Caco-2 (cell line): ENCODE measurements at regions of chr1 and their contacts with region 1.

Region 1: GRCh38 chr1:210099921-210100320 is 132.7 kb upstream of the SERTAD4 start:
- DNase-seq: no peak
- H3K4me3 ChIP-seq: no peak overlapping the region
- H3K4me3 Mint-ChIP-seq: no peak overlapping the region
- H3K27ac Mint-ChIP-seq: no peak overlapping the region
- H3K4me1 ChIP-seq: peaks cover 20% of the 10 kb centered on the region
- H3K4me1 Mint-ChIP-seq: peaks cover 6% of the 10 kb centered on the region
- H3K27me3 ChIP-seq: no peaks in the 10 kb centered on the region
- H3K27me3 Mint-ChIP-seq: no peaks in the 10 kb centered on the region
- CTCF ChIP-seq: no peak

Region 2: GRCh38 chr1:209816923-209817322 is 283.0 kb before region 1 on chr1:
- CTCF ChIA-PET with region 1: no interaction called
- POLR2A ChIA-PET with region 1: no interaction called
- intact Hi-C with region 1: no loop called
- DNase-seq: no peak
- H3K4me3 ChIP-seq: no peak overlapping the region
- H3K4me3 Mint-ChIP-seq: peak overlapping the region; percentile 34
- H3K27ac Mint-ChIP-seq: peak overlapping the region; percentile 82
- H3K4me1 ChIP-seq: 0 out of 2 replicates have a peak, but pooled peaks cover 4% of the 10 kb centered on the region
- H3K4me1 Mint-ChIP-seq: peaks cover 8% of the 10 kb centered on the region
- H3K27me3 ChIP-seq: no peaks in the 10 kb centered on the region
- H3K27me3 Mint-ChIP-seq: no peaks in the 10 kb centered on the region
- CTCF ChIP-seq: no peak

Region 3: DNA sequence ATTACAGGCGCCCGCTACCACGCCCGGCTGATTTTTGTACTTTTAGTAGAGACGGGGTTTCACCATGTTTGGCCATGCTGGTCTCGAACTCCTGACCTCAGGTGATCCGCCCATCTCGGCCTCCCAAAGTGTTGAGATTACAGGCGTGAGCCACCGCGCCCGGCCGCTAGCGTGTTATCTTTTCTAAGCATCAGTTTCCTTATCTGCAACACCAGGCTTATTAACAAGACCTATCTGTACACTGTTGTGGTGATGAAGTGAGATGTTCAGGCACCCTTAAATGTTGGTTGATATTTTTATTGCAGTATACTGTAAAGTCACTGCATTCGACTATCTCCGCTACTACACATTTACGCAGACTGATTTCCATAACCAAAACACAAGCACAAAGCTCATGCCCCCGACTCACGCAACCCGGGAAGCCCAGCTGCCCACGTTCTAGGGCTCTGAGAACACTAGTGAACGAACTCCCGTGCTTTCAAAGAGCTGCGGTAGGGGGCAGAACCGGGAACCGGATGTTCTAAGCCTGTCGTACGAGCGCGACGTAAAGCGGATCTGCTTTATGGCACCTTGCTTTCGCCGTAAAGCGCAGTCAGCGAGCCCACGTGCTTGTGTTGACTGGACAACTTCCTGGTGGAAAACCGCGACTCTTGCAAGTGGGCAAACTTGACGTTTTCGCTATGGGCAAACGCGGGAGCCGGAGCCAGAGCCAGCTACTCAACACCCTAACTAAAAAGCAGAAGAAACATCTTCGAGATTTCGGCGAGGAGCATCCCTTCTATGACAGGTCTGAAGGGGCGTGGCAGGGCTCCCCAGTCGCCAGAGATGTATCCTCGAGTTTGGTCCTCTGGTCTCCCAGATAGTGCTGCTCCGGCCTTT is 272.3 kb before region 1 on chr1 and contains the start of gene UTP25:
- CTCF ChIA-PET with region 1: no interaction called
- POLR2A ChIA-PET with region 1: no interaction called
- intact Hi-C with region 1: loop called (anchors 5 kb)
- DNase-seq: peak; percentile 94 to 96
- H3K4me3 ChIP-seq: peak within 1 kb of the TSS; percentile 92
- H3K4me3 Mint-ChIP-seq: peak within 1 kb of the TSS; percentile 83
- H3K27ac Mint-ChIP-seq: peak within 1 kb of the TSS; percentile 94
- H3K4me1 ChIP-seq: peaks cover 17% of the 10 kb centered on the region
- H3K4me1 Mint-ChIP-seq: peaks cover 29% of the 10 kb centered on the region
- H3K27me3 ChIP-seq: no peaks in the 10 kb centered on the region
- H3K27me3 Mint-ChIP-seq: peaks cover 2% of the 10 kb centered on the region
- CTCF ChIP-seq: peak; percentile 61 to 83
- total RNA-seq, gene UTP25: 9.5 and 9.8 TPM in 2 replicates

Region 4: DNA sequence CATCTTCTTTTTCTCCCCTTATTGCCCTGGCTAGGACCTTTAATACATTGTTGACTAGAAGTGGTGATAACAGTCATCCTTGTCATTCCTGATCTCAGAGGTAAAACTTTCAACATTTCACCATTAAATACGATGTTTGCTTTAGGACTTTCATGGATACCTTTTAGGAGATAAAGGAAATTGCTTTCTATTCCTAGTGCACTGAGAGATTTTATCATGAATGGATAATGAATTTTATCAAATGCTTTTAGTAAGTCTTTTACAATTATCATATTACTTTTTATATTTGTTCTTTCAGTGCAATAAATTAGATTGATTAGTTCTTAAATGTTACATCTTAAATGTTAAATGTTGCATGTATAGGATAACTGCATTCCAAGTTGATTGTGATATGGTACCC is 14.6 kb before region 1 on chr1:
- CTCF ChIA-PET with region 1: interaction called, 3 read pairs
- POLR2A ChIA-PET with region 1: interaction called, 3 read pairs
- intact Hi-C with region 1: loop called (anchors 1 kb)
- DNase-seq: peak in 1 of 2 experiments; percentile 15
- H3K4me3 ChIP-seq: no peak overlapping the region
- H3K4me3 Mint-ChIP-seq: peak overlapping the region; percentile 3
- H3K27ac Mint-ChIP-seq: no peak overlapping the region
- H3K4me1 ChIP-seq: peaks cover 40% of the 10 kb centered on the region
- H3K4me1 Mint-ChIP-seq: peaks cover 19% of the 10 kb centered on the region
- H3K27me3 ChIP-seq: no peaks in the 10 kb centered on the region
- H3K27me3 Mint-ChIP-seq: no peaks in the 10 kb centered on the region
- CTCF ChIP-seq: no peak

Region 5: DNA sequence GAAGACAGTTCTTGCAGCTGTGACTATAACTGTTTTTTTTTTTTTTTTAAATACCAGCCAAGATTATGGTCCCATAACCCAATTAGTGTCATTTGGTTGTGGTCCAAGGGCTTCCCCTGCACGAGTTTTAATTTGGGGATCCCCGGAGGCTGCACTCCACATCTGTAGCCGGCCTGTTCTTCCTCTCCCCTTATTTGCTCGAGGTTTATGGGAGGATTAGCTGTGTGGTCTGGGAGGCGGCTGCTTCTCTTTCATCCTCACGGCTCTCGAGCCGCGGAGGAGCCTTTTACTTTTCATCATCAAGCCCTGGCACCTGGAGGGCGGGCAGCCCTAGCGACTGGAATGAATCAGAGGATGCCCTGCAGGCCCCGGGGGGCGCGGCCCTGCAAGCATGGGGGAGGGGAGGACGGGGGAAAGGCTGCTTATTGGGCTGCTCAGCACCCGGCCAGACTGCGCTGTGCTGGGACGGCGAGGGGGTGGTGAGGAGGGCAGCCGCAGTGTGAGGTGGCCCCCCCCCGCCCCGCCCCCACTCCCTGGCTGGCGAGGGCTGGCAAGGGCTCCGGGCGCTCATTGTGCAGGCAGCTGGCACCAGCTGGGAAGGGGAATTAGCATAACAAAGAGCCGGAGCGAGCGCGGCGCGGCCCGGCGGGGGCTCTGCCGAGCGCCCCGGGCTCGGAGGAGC is 151.2 kb after region 1 on chr1:
- CTCF ChIA-PET with region 1: no interaction called
- POLR2A ChIA-PET with region 1: interaction called, 15 read pairs
- intact Hi-C with region 1: no loop called
- DNase-seq: peak; percentile 79 to 80
- H3K4me3 ChIP-seq: peak overlapping the region; percentile 46
- H3K4me3 Mint-ChIP-seq: peak overlapping the region; percentile 67
- H3K27ac Mint-ChIP-seq: peak overlapping the region; percentile 11
- H3K4me1 ChIP-seq: peaks cover 15% of the 10 kb centered on the region
- H3K4me1 Mint-ChIP-seq: peaks cover 10% of the 10 kb centered on the region
- H3K27me3 ChIP-seq: no peaks in the 10 kb centered on the region
- H3K27me3 Mint-ChIP-seq: peaks cover 4% of the 10 kb centered on the region
- CTCF ChIP-seq: no peak